ENCODE measurements at regions of chr5 and their contacts with region 1.

Region 1: GRCh38 chr5:129554134-129554904 is 94.2 kb downstream of the ADAMTS19 start:
- DNase-seq: no peak
- H3K4me3 Mint-ChIP-seq: no peak overlapping the region
- H3K27ac Mint-ChIP-seq: no peak overlapping the region
- H3K4me1 Mint-ChIP-seq: no peaks in the 10 kb centered on the region
- H3K27me3 Mint-ChIP-seq: peaks cover 38% of the 10 kb centered on the region
- CTCF ChIP-seq: no peak

Region 2: GRCh38 chr5:129172580-129172979 is 381.7 kb before region 1 on chr5:
- CTCF ChIA-PET with region 1: no interaction called
- POLR2A ChIA-PET with region 1: no interaction called
- intact Hi-C with region 1: loop called (anchors 10 kb)
- DNase-seq: peak; percentile 45
- H3K4me3 Mint-ChIP-seq: no peak overlapping the region
- H3K27ac Mint-ChIP-seq: no peak overlapping the region
- H3K4me1 Mint-ChIP-seq: no peaks in the 10 kb centered on the region
- H3K27me3 Mint-ChIP-seq: peaks cover 50% of the 10 kb centered on the region
- CTCF ChIP-seq: peak; percentile 38

Region 3: GRCh38 chr5:129569295-129569694 is 15.0 kb after region 1 on chr5:
- CTCF ChIA-PET with region 1: no interaction called
- POLR2A ChIA-PET with region 1: no interaction called
- intact Hi-C with region 1: no loop called
- DNase-seq: no peak
- H3K4me3 Mint-ChIP-seq: no peak overlapping the region
- H3K27ac Mint-ChIP-seq: no peak overlapping the region
- H3K4me1 Mint-ChIP-seq: no peaks in the 10 kb centered on the region
- H3K27me3 Mint-ChIP-seq: peaks cover 82% of the 10 kb centered on the region
- CTCF ChIP-seq: no peak

Measured in MCF 10A (cell line).